PC-9 (cell line): ENCODE measurements at regions of chr9 and their contacts with region 1.

Region 1: DNA sequence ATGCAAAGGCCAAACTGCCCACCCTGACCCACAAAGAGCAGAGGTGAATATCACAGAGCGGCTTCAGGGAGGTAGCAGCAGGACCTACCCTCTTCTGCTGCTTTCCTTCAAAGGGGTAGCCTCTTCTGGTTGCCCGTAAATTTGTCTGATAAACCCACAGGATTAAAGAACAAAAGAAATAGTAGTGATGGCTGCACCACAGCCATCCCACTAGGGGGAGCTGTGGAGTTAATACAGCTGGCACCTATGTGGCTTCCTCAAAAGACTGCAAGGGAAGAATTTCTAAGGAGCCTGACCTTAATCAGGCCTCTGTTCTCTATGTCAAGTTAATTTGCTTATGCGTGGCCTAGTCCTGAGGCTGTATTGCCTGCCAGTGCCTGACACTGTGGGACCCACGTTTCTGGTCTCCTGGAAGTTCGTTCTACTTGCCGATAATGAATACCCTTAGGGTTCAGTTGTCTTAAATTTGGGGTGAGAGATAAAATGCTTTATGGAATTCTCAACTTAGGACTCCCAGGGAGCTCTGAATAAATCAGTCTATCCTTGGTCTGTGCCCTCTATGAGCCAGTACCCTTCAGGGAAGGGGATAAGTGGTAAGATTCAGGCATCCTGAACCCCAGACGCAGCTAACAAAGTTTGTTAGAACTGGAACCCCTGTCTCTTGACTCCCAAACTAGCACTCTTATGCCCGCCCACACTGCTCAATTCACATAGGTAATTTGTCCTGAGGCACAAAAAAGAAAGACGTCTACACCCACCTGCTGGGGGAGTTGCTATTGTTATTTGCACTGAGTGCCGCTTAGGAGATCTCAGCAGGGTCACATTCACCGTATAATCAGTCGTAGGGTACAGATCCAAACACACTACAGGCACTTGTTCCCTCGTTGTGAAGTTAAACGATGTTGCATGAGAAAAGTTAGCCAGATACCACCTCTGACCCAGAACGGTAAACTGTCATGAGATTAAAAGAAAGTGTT is 77.1 kb downstream of the SUSD1 start:
- DNase-seq: peak; percentile 64 to 68
- H3K4me3 ChIP-seq: no peak overlapping the region
- H3K27ac ChIP-seq: peak overlapping the region; percentile 9; the same call in 1 of the 2 replicates
- H3K4me1 ChIP-seq: no peaks in the 10 kb centered on the region
- H3K27me3 ChIP-seq: no peaks in the 10 kb centered on the region
- CTCF ChIP-seq: peak; percentile 92

Region 2: DNA sequence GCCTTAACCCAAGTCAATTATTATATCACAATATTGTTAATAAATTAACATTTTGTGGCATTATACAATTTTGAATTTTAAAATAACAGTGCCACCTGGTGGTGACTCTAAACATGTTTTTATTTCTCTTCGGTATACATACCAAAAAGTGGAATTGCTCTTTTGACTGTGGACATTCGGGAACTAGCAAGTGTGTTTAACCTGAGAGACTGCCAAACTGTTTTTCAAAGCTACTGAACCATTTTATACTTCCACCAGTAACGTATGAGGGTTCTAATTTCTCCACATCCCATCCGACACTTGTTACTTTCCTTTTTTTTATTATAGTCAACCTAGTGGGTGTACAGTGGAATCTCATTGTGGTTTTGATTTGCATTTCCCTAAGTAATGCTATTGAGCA is 263.6 kb after region 1 on chr9:
- CTCF ChIA-PET with region 1: interaction called, 6 read pairs
- POLR2A ChIA-PET with region 1: interaction called, 3 read pairs
- intact Hi-C with region 1: loop called (anchors 1 kb)
- DNase-seq: peak in 1 of 2 experiments; percentile 53
- H3K4me3 ChIP-seq: no peak overlapping the region
- H3K27ac ChIP-seq: no peak overlapping the region
- H3K4me1 ChIP-seq: peaks cover 11% of the 10 kb centered on the region; the same call in 1 of the 2 replicates
- H3K27me3 ChIP-seq: no peaks in the 10 kb centered on the region
- CTCF ChIP-seq: peak; percentile 78

Region 3: GRCh38 chr9:112793213-112793810 is 695.3 kb after region 1 on chr9:
- CTCF ChIA-PET with region 1: no interaction called
- POLR2A ChIA-PET with region 1: no interaction called
- intact Hi-C with region 1: loop called (anchors 5 kb)
- DNase-seq: peak in 1 of 2 experiments; percentile 71
- H3K4me3 ChIP-seq: no peak overlapping the region
- H3K27ac ChIP-seq: no peak overlapping the region
- H3K4me1 ChIP-seq: no peaks in the 10 kb centered on the region
- H3K27me3 ChIP-seq: no peaks in the 10 kb centered on the region
- CTCF ChIP-seq: peak; percentile 78